Ascending aorta (tissue), 2 donors: ENCODE measurements at regions of chr4 and their contacts with region 1.

Region 1: DNA sequence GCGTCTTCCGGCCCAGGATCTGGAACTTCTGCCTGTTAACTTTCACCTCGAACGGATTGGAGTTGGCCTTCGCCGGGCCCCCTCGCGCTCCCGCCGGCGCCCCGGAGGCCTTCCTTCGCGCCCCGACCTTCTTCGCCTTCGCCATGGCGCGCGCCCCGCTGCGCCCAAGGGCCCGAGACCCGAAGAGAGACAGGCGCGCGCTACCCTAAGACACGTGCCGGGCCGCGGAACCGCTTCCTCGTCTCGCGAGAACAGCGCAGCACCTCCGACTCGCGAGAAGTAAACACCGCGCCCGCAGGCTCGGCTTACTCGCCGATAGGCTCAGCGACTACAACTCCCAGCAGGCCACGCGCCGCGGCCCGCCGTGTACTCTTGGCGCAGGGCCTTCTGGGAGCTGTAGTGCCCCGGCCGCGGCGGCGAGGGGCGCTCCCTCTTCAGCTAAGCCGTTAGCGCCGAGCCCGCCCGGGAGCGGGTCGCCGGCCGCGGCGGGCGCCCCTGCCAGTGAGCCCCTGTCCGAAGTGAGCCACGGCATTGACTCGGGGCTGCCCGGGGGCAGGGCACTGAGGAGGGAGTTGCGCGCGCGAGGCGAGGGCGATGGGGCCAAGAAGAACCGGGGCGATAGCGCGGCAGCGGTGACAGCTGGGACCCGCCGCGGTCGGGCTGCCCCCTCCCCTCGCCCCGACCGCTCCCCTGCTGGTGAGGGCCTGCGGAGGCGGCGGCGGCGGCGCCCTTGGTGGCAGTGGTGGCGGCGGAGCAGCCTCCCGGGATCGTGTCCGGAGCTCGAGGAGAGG is at the starts of genes GRK4 and NOP14:
- DNase-seq: peak; percentile 89 to 99
- H3K4me3 ChIP-seq: peak within 1 kb of the TSS; percentile 88 to 94
- H3K27ac ChIP-seq: peak within 1 kb of the TSS; percentile 78 to 83
- H3K4me1 ChIP-seq: peaks cover 3 to 12% of the 10 kb centered on the region in 2 donors
- H3K27me3 ChIP-seq: no peaks in the 10 kb centered on the region
- CTCF ChIP-seq: peak in 2 of 3 experiments; percentile 36 to 51
- total RNA-seq, gene GRK4: 1.9 TPM
- total RNA-seq, gene NOP14: 12.3 TPM

Region 2: GRCh38 chr4:1856042-1856788 is 1107.2 kb before region 1 on chr4 and contains the start of gene LETM1:
- intact Hi-C with region 1: loop called (anchors 10 kb)
- DNase-seq: peak; percentile 86 to 97
- H3K4me3 ChIP-seq: peak within 1 kb of the TSS; percentile 85 to 86
- H3K27ac ChIP-seq: peak within 1 kb of the TSS; percentile 78 to 82
- H3K4me1 ChIP-seq: peaks cover 0 to 10% of the 10 kb centered on the region in 2 donors
- H3K27me3 ChIP-seq: no peaks in the 10 kb centered on the region
- CTCF ChIP-seq: peak in 1 of 3 experiments; percentile 28
- total RNA-seq, gene LETM1: 37.7 TPM

Region 3: GRCh38 chr4:2418650-2419571 is 544.5 kb before region 1 on chr4 and contains the start of gene CFAP99:
- intact Hi-C with region 1: loop called (anchors 1 kb)
- DNase-seq: peak; percentile 87 to 99
- H3K4me3 ChIP-seq: peak within 1 kb of the TSS; percentile 76 to 86
- H3K27ac ChIP-seq: peak within 1 kb of the TSS; percentile 19 to 29
- H3K4me1 ChIP-seq: peaks cover 6 to 9% of the 10 kb centered on the region in 2 donors
- H3K27me3 ChIP-seq: no peaks in the 10 kb centered on the region
- CTCF ChIP-seq: no peak
- total RNA-seq, gene CFAP99: not detected

Region 4: DNA sequence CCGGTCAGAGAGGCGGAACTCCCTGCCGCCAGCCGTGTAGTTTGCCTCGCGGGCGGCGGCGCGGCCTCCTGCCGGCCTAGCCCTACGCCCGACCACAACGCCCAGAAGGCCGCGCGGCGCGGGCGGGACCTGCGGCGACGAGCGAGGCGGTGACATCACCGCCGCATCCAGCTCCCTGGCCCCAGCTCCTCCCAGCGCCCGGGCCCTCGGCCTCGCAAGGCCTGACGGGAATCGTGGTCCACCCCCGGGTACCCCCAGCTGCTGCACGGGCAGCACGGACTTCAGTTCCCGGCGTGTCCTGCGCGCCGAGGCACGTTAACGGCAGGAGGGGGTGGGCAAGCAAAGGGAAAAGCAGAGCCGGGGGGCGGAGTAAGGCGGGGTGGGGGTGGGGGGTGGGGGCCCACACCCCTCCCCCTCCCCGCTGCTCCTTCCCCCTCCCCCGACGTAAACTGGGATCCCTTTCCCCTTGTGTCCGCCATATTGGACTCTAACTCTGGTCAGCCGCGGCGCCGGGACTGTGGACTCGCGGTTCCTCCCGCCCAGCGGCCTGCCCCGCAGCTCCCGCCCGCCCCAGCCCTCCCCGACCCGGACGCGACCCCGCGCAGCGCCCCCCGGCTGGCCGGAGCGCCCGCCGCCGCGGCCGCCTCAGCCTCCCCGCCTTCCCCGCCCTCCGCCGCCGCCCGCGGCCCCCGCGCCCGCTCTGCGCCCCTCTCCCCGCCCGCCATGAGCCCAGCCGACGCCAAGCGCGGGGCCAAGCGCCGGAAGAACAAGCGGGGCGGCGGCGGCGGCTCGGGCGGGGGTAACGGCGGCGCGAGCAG is 427.0 kb before region 1 on chr4 and contains the start of gene FAM193A:
- intact Hi-C with region 1: loop called (anchors 1 kb)
- DNase-seq: peak; percentile 98 to 100
- H3K4me3 ChIP-seq: peak within 1 kb of the TSS; percentile 97 to 100
- H3K27ac ChIP-seq: peak within 1 kb of the TSS; percentile 89 to 97
- H3K4me1 ChIP-seq: peaks cover 15 to 16% of the 10 kb centered on the region in 2 donors
- H3K27me3 ChIP-seq: no peaks in the 10 kb centered on the region
- CTCF ChIP-seq: no peak
- total RNA-seq, gene FAM193A: 30.9 TPM

Region 5: GRCh38 chr4:2761035-2761923 is 202.1 kb before region 1 on chr4:
- intact Hi-C with region 1: loop called (anchors 1 kb)
- DNase-seq: no peak
- H3K4me3 ChIP-seq: no peak overlapping the region
- H3K27ac ChIP-seq: peak overlapping the region in 1 of 2 donors; percentile 63
- H3K4me1 ChIP-seq: peaks cover 0 to 3% of the 10 kb centered on the region in 2 donors
- H3K27me3 ChIP-seq: no peaks in the 10 kb centered on the region
- CTCF ChIP-seq: no peak

Region 6: GRCh38 chr4:2934813-2935761 is 28.3 kb before region 1 on chr4:
- intact Hi-C with region 1: loop called (anchors 1 kb)
- DNase-seq: peak; percentile 72 to 95
- H3K4me3 ChIP-seq: peak overlapping the region; percentile 59 to 76
- H3K27ac ChIP-seq: peak overlapping the region; percentile 77 to 79
- H3K4me1 ChIP-seq: peaks cover 0 to 21% of the 10 kb centered on the region in 2 donors
- H3K27me3 ChIP-seq: no peaks in the 10 kb centered on the region
- CTCF ChIP-seq: no peak

Region 7: GRCh38 chr4:3074078-3074795 is 110.9 kb after region 1 on chr4 and contains the starts of genes HTT and HTT-AS:
- intact Hi-C with region 1: loop called (anchors 1 kb)
- DNase-seq: peak; percentile 80 to 97
- H3K4me3 ChIP-seq: peak within 1 kb of the TSS; percentile 95 to 99
- H3K27ac ChIP-seq: peak within 1 kb of the TSS; percentile 86 to 98
- H3K4me1 ChIP-seq: peaks cover 12 to 14% of the 10 kb centered on the region in 2 donors
- H3K27me3 ChIP-seq: no peaks in the 10 kb centered on the region
- CTCF ChIP-seq: no peak
- total RNA-seq, gene HTT: 23.7 TPM
- total RNA-seq, gene HTT-AS: not detected